AG04449 (cell line): ENCODE measurements at regions of chr11 and their contacts with region 1.

Region 1: GRCh38 chr11:8786933-8787332 is 104.3 kb downstream of the RPL27A start:
- DNase-seq: no peak
- H3K4me3 ChIP-seq: no peak overlapping the region
- CTCF ChIP-seq: peak; percentile 6

Region 2: GRCh38 chr11:8800520-8801110 is 13.7 kb after region 1 on chr11:
- CTCF ChIA-PET with region 1: interaction called, 30 read pairs
- POLR2A ChIA-PET with region 1: no interaction called
- DNase-seq: no peak
- H3K4me3 ChIP-seq: no peak overlapping the region
- CTCF ChIP-seq: no peak